Activated CD4-positive, alpha-beta memory T cell treated with anti-CD3 and anti-CD28 coated beads, Interleukin-2, amount 10 ng/mL, durations not matched to agents 7 days and 5 days (primary cell): ENCODE measurements at regions of chr2 and their contacts with region 1.

Region 1: GRCh38 chr2:72770879-72771461 is 54.9 kb downstream of the EXOC6B start:
- DNase-seq: peak; percentile 51
- H3K4me3 Mint-ChIP-seq: no peak overlapping the region
- H3K27ac Mint-ChIP-seq: no peak overlapping the region
- H3K4me1 Mint-ChIP-seq: no peaks in the 10 kb centered on the region
- H3K27me3 Mint-ChIP-seq: no peaks in the 10 kb centered on the region

Region 2: DNA sequence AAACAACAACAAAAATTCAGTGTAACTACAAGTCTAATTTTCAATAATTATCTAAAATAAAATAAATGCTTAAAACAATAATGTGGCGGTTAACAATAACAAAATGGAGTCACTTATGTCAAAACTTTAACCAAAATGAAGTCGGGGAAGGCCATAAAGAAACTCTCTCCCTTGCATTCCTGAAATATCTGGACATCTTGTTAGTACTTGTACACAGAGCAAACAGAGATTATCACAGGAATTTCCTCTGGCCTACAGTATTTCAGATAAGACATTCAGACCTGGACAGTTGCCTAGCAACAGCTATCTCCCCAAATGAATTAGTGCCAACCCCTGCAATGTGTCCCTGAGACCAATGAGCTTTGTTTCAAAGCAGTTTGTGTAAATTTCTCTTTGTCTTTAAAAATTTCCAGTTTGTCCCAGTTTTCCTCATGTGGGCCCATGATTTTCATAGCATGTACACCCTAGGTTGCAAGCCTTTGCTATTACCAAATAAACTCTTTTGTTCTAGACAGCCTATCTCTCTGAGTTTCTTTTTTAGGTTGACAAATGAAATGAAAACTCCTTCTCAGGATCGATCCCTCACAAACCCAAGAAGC is 13.7 kb before region 1 on chr2:
- CTCF ChIA-PET with region 1: no interaction called
- POLR2A ChIA-PET with region 1: no interaction called
- DNase-seq: no peak
- H3K4me3 Mint-ChIP-seq: no peak overlapping the region
- H3K27ac Mint-ChIP-seq: no peak overlapping the region
- H3K4me1 Mint-ChIP-seq: no peaks in the 10 kb centered on the region
- H3K27me3 Mint-ChIP-seq: no peaks in the 10 kb centered on the region

Region 3: GRCh38 chr2:72862239-72862988 is 91.4 kb after region 1 on chr2:
- CTCF ChIA-PET with region 1: interaction called, 17 read pairs
- POLR2A ChIA-PET with region 1: no interaction called
- DNase-seq: peak; percentile 88
- H3K4me3 Mint-ChIP-seq: peak overlapping the region; percentile 25
- H3K27ac Mint-ChIP-seq: no peak overlapping the region
- H3K4me1 Mint-ChIP-seq: peaks cover 14% of the 10 kb centered on the region
- H3K27me3 Mint-ChIP-seq: peaks cover 48% of the 10 kb centered on the region